ENCODE measurements at regions of chr11 and their contacts with region 1.

Region 1: GRCh38 chr11:35617687-35618496 is at the start of gene FJX1:
- DNase-seq: peak; percentile 86
- ATAC-seq: peak; percentile 46
- H3K4me3 ChIP-seq: peak within 1 kb of the TSS; percentile 88
- H3K27ac ChIP-seq: peak within 1 kb of the TSS; percentile 93
- H3K4me1 ChIP-seq: peaks cover 53% of the 10 kb centered on the region
- H3K27me3 ChIP-seq: no peaks in the 10 kb centered on the region
- CTCF ChIP-seq: no peak
- total RNA-seq, gene FJX1: 71.4 and 97.1 TPM in 2 replicates

Region 2: DNA sequence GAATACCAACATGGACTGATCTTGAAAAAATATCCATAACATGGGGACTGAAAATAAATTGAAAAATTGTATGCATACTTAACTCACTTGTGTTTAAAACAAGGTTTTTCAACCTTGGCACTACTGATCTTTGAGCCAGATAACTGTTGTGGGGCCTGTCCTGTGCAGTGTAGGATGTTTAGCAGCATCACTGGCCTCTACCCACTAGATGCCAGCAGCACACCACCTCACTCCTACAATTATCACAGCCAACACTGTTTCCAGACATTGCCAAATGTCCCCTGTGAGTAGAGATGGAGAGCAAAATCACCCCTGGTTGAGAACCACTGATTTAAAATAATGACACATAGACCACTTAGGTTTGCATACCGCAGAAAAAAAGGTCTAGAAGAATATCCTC is 153.6 kb before region 1 on chr11:
- CTCF ChIA-PET with region 1: no interaction called
- POLR2A ChIA-PET with region 1: no interaction called
- intact Hi-C with region 1: loop called (anchors 1 kb)
- DNase-seq: peak; percentile 54
- ATAC-seq: peak; percentile 95
- H3K4me3 ChIP-seq: no peak overlapping the region
- H3K27ac ChIP-seq: no peak overlapping the region
- H3K4me1 ChIP-seq: peaks cover 12% of the 10 kb centered on the region; the same call in 1 of the 2 replicates
- H3K27me3 ChIP-seq: no peaks in the 10 kb centered on the region
- CTCF ChIP-seq: peak; percentile 60

Region 3: DNA sequence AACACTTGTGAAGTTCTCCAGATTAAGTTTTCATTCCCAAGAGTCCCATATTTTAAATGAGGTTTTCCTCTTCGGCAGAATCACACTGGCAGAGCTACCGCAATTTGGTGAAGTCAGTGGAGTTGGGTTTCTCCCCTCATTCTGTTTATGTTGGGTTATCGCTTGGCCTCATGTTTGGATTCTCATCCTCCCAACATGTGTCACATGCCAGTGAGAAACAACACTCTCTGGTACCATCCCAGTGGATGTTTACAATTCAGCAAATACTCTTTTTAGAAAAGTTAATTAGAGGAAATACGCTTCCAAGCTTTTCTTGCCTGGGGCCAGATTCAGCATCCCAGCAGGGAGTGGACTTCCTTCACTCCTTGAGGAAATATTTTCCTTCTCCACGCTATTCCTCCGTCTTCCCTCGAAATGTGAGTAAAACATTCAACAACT is 94.5 kb before region 1 on chr11:
- CTCF ChIA-PET with region 1: no interaction called
- POLR2A ChIA-PET with region 1: no interaction called
- intact Hi-C with region 1: no loop called
- DNase-seq: no peak
- ATAC-seq: no peak
- H3K4me3 ChIP-seq: no peak overlapping the region
- H3K27ac ChIP-seq: no peak overlapping the region
- H3K4me1 ChIP-seq: peaks cover 9% of the 10 kb centered on the region; the same call in 1 of the 2 replicates
- H3K27me3 ChIP-seq: no peaks in the 10 kb centered on the region
- CTCF ChIP-seq: no peak

Region 4: GRCh38 chr11:35662649-35663407 is 44.9 kb after region 1 on chr11 and contains the start of gene TRIM44:
- CTCF ChIA-PET with region 1: no interaction called
- POLR2A ChIA-PET with region 1: interaction called, 8 read pairs
- intact Hi-C with region 1: loop called (anchors 1 kb)
- DNase-seq: peak; percentile 85
- ATAC-seq: peak; percentile 62
- H3K4me3 ChIP-seq: peak within 1 kb of the TSS; percentile 74
- H3K27ac ChIP-seq: peak within 1 kb of the TSS; percentile 91
- H3K4me1 ChIP-seq: peaks cover 30% of the 10 kb centered on the region
- H3K27me3 ChIP-seq: no peaks in the 10 kb centered on the region
- CTCF ChIP-seq: no peak
- total RNA-seq, gene TRIM44: 14.0 TPM in 2 replicates

Region 5: DNA sequence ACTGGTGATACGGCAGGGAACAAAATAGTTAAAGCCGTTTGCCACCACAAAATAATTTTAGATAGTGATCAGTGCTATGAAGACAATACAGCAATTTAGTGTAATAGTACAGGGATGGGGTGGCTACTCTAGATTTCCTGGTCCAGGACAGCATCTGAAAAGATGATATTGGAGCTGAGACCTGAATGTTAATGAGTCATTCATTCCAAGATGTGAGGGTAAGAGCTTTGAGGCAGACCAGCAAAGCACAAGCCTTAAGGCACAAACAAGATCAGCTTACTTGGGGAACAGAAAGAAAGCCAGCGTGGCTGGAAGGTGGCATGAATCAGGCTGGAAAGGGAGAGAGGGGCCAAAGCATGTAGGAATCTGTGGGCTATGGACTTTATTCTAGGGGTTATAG is 177.0 kb after region 1 on chr11:
- CTCF ChIA-PET with region 1: no interaction called
- POLR2A ChIA-PET with region 1: no interaction called
- intact Hi-C with region 1: loop called (anchors 5 kb)
- DNase-seq: peak; percentile 77
- ATAC-seq: peak; percentile 33
- H3K4me3 ChIP-seq: no peak overlapping the region
- H3K27ac ChIP-seq: peak overlapping the region; percentile 16
- H3K4me1 ChIP-seq: peaks cover 56% of the 10 kb centered on the region
- H3K27me3 ChIP-seq: no peaks in the 10 kb centered on the region
- CTCF ChIP-seq: no peak

Region 6: DNA sequence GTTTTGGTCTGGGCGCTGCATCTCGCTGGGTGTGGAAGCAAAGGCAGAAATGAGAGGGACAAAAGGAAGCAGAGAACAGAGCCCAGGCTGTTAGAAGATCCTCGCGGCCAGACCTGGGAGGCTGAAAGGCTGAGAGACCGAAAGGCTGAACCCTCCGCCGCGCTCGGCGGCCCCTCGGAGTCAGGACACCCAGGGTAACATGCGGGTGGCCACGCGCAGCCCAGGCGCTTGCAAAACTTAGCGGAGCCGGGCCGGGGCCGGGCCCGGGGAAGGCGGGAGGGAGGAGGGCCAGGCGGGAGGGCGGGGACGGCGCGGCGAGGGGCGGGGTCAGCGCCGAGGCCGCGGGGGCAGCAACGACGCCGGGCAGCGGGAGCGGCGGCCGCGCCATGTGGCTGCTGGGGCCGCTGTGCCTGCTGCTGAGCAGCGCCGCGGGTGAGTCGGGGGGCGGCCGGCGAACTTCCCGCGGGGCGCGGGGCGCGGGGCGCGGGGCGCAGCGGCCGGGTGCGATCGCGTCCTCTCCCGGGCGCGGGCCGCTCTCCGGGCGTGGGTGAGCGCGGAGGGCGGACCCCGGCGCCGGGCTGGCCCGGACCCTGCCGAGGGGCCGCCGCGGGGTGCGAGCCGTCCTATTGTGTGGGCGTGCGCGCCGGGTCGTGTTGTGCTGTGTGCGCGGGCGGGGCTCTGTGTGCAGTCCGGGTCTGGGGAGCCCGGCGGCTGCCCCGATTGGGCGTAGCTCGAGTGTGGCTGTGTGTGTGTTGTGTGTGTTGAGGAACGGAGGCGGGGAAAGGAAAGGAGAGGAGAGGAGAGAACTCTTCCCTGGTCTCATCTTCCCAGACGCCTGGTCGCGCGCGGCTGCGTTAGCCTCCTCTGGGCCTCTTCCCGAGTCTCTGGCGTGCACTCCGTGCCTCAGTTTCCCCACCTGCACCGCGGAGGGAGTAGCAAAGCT is 326.1 kb after region 1 on chr11 and contains the start of gene LDLRAD3:
- CTCF ChIA-PET with region 1: no interaction called
- POLR2A ChIA-PET with region 1: no interaction called
- intact Hi-C with region 1: loop called (anchors 5 kb)
- DNase-seq: peak; percentile 70
- ATAC-seq: peak; percentile 87
- H3K4me3 ChIP-seq: peak within 1 kb of the TSS; percentile 93
- H3K27ac ChIP-seq: peak within 1 kb of the TSS; percentile 35
- H3K4me1 ChIP-seq: peaks cover 36% of the 10 kb centered on the region
- H3K27me3 ChIP-seq: no peaks in the 10 kb centered on the region
- CTCF ChIP-seq: no peak
- total RNA-seq, gene LDLRAD3: 15.3 and 15.6 TPM in 2 replicates

Region 7: DNA sequence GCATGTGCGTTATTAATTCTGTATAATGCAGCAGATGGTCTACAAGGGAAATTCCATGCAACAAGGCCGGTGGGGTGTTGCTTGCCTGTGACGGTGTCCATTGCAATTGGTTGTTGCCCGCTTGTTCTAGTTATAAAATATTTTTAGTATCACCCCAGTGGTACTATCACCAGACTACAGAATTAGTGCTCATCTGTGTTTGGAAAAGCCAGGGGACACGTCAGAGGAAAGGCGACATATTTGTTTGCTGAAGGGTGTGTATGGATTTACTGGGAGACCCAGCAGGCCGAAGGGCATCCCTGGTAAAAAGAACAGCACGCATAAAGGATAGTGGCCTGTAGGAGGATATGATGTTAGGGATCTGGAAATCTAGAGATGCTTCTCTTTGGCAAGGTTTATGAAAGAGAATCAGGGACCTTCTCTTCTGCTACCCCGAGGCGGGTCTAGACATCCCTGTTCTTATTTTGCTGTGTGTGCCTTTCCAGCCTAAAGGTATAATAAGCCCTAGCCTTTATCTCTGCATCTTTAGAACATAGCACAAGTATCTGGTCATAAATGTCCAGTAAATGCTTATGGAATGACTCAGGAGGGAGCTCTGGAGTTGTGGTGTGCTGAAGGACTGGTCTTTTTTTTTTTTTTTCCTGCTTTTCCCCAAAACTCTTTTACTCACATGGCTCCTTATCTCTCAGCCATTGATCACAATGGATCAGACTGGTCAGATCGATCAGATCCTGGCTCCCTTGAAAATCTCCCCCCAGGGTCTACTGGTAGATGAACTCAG is 416.8 kb after region 1 on chr11:
- CTCF ChIA-PET with region 1: no interaction called
- POLR2A ChIA-PET with region 1: no interaction called
- intact Hi-C with region 1: loop called (anchors 10 kb)
- DNase-seq: peak; percentile 92
- ATAC-seq: peak; percentile 94
- H3K4me3 ChIP-seq: peak overlapping the region; percentile 42
- H3K27ac ChIP-seq: peak overlapping the region; percentile 93
- H3K4me1 ChIP-seq: peaks cover 43% of the 10 kb centered on the region
- H3K27me3 ChIP-seq: no peaks in the 10 kb centered on the region
- CTCF ChIP-seq: no peak

Region 8: GRCh38 chr11:36265793-36266628 is 648.1 kb after region 1 on chr11:
- CTCF ChIA-PET with region 1: interaction called, 5 read pairs
- POLR2A ChIA-PET with region 1: no interaction called
- intact Hi-C with region 1: loop called (anchors 2 kb)
- DNase-seq: peak; percentile 70
- ATAC-seq: peak; percentile 86
- H3K4me3 ChIP-seq: no peak overlapping the region
- H3K27ac ChIP-seq: no peak overlapping the region
- H3K4me1 ChIP-seq: no peaks in the 10 kb centered on the region
- H3K27me3 ChIP-seq: no peaks in the 10 kb centered on the region
- CTCF ChIP-seq: peak; percentile 90

Measured in PC-3 (cell line).